H1 (cell line): ENCODE measurements at regions of chr2 and their contacts with region 1.

Region 1: DNA sequence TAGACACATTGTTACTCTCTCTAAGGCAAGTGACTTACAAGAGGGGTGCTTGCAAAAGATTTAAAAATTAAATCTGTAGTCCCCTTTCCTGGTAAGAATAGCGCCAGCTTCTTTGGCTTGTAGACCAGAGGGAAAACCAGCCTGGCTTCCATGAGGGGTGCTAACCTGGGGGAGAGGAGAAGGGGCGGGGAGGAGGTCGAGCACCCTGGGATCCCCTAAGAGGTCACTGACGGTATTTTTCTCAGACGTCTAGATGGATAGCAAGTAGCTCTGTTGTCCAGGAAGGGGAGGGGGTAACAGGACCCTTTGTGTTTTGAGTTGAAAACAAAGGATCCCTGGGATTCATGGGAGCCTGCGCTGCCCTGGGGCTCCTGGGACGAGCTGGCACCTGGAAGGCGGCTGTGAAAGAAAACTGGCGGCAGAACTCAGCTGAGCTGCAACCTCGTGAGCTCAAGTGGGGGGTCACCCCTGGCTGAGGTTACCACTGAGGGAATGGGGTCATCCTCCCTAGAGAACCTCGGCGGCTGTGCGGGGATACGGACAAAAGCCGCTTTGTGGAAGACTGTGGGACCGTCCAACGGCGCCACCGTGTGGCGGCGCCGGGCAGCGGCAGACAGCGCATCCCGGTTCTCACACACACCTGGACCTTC is 37.8 kb upstream of the MRPL19 start:
- DNase-seq: peak; percentile 66 to 89
- H3K4me3 ChIP-seq: peak overlapping the region; percentile 21 to 57 (median 44); a peak in 5 of 8 replicates
- H3K27ac ChIP-seq: no peak overlapping the region
- H3K4me1 ChIP-seq: peaks cover 0 to 4% (median 2%) of the 10 kb centered on the region in 4 experiments; a peak in 4 of 7 replicates
- H3K27me3 ChIP-seq: no peaks in the 10 kb centered on the region; a peak in 2 of 7 replicates
- CTCF ChIP-seq: peak; percentile 90 to 94 (median 92)
- EP300 ChIP-seq: no peak
- POLR2A ChIP-seq: no peak
- RAD21 ChIP-seq: peak; percentile 91 to 93

Region 2: DNA sequence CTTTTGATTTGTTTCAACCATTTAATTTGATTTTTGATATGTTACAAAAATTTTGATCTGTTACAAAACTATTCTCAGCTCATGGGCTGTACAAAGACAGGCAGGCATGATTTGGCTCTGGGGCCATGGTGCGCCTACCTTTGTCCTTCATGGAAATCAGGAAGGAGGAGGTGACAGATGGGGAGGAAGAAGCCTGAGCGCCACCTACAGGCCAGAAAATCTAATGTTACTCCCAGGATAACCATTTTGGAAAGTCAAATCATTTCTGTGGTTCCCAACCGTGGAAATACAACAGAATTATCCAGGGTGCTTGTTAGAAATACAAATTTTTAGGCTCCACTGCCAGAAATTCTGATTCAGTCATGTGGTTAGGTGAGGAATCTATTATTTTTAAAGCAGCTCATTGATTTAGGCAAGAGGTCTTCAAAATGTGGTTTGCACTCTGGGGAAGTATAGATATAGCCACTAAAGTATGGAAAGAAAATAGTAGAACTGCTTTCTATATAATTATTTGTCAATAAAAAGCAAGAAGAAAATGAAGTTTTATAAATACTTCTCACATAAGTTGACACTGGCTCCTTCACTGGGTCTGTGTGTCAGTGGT is 142.0 kb before region 1 on chr2:
- CTCF ChIA-PET with region 1: interaction called, 117 read pairs
- POLR2A ChIA-PET with region 1: interaction called, 3 read pairs
- DNase-seq: peak; percentile 10 to 80
- H3K4me3 ChIP-seq: no peak overlapping the region
- H3K27ac ChIP-seq: no peak overlapping the region
- H3K4me1 ChIP-seq: peaks cover 0 to 3% (median 0%) of the 10 kb centered on the region in 4 experiments; a peak in 2 of 7 replicates
- H3K27me3 ChIP-seq: no peaks in the 10 kb centered on the region
- CTCF ChIP-seq: peak; percentile 44 to 71 (median 65)
- EP300 ChIP-seq: no peak
- POLR2A ChIP-seq: no peak
- RAD21 ChIP-seq: peak; percentile 61 to 67

Region 3: GRCh38 chr2:75553935-75554531 is 54.8 kb before region 1 on chr2:
- CTCF ChIA-PET with region 1: interaction called, 10 read pairs
- POLR2A ChIA-PET with region 1: no interaction called
- DNase-seq: no peak
- H3K4me3 ChIP-seq: peak overlapping the region in 1 of 4 experiments; percentile 9; a peak in 1 of 8 replicates
- H3K27ac ChIP-seq: no peak overlapping the region
- H3K4me1 ChIP-seq: peaks cover 5 to 23% (median 15%) of the 10 kb centered on the region in 4 experiments
- H3K27me3 ChIP-seq: peaks cover 0 to 12% (median under 1%) of the 10 kb centered on the region in 4 experiments; a peak in 3 of 7 replicates
- CTCF ChIP-seq: no peak
- EP300 ChIP-seq: no peak
- POLR2A ChIP-seq: no peak
- RAD21 ChIP-seq: no peak

Region 4: DNA sequence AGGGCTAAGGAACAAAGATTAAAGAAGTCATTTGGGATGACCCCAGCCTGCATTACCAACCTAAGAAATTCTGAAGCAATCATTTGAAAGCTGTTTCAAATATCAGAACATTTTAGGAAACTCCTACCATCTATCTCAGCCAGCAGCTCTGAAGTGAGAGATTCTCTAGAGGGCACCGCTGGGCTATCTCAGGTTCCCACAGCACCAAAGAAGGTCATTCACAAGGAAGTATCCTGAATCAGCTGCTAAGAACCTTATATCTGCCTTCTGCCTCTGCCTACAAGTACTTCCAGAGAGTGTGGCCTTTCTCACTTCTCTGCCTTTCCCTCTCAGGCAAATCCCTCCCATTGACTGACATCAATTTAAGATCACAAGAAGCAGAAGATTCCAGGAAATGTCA is 34.7 kb before region 1 on chr2:
- CTCF ChIA-PET with region 1: interaction called, 18 read pairs
- POLR2A ChIA-PET with region 1: no interaction called
- DNase-seq: no peak
- H3K4me3 ChIP-seq: no peak overlapping the region
- H3K27ac ChIP-seq: no peak overlapping the region
- H3K4me1 ChIP-seq: no peaks in the 10 kb centered on the region
- H3K27me3 ChIP-seq: no peaks in the 10 kb centered on the region; a peak in 2 of 7 replicates
- CTCF ChIP-seq: peak in 1 of 3 experiments; percentile 2; a peak in 1 of 4 replicates
- EP300 ChIP-seq: no peak
- POLR2A ChIP-seq: no peak
- RAD21 ChIP-seq: peak; percentile 22 to 30; a peak in 2 of 4 replicates

Region 5: DNA sequence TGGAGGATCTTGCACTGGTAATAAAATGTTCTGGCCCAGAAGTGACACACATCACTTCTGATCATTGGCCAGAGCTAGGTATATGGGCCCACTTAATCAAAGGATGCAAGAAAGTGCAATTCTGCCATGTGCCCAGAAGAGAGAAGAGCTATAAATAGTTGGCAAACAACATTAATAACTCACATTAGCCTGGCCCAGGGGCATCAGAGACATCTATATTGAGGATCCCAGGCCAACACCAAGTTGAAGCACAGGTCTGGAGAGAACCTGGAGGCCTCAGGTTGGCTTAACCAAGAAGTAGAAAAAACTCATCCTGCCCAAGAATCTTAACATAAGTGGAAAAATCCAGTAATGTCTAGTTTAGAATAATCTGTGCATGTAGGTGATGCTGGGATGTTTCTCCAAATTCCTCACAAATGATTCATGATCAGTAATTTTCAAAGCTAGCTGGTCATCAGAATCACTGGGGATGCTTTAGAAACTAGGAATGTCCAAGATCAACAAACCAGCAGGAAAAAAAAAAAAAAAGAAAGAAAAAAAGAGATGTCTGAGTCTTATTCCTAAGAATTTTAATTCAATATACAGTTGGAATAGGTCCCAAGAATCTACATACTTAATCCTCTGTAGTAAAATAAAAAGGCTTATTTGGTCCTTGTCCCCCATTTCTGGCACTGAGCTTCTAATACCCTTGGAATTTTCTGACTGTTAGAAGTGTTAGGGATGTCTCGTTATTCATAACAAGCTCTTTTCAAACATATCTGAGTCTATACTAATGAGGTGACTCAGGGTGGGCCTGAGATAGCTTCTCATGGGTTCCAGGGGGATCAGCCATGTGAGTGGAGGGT is 13.0 kb before region 1 on chr2:
- CTCF ChIA-PET with region 1: interaction called, 17 read pairs
- POLR2A ChIA-PET with region 1: interaction called, 3 read pairs
- DNase-seq: no peak
- H3K4me3 ChIP-seq: no peak overlapping the region
- H3K27ac ChIP-seq: no peak overlapping the region
- H3K4me1 ChIP-seq: no peaks in the 10 kb centered on the region
- H3K27me3 ChIP-seq: no peaks in the 10 kb centered on the region
- CTCF ChIP-seq: no peak
- EP300 ChIP-seq: no peak
- POLR2A ChIP-seq: no peak
- RAD21 ChIP-seq: no peak

Region 6: DNA sequence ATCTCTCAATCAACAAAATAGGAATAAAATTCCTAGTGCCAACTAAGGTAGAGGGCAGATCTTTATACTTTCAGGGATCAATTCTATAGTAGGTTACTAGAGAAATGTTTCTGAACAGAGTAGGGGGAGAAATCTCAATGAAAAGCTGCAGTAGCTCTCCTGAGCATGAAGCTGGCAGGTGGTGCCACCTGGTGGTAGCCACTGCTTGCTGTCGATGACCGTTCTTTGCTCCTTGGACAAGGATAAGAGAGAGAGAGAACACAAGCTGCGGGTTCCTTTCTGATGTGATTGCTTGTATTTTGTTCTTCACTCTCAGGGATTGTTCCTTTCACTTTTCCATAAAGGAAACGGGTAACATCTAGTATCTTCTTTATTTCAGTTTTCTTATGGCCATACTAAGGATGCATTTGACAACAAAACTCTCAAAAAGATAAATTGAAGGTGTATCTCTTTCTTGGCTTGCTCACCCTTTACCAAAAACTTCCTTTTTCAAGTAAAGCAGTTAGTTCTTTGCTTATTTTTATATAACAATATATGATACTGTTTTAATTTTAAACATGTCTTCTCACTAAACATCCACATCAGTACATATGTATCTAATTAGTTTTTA is 19.2 kb after region 1 on chr2:
- CTCF ChIA-PET with region 1: interaction called, 16 read pairs
- POLR2A ChIA-PET with region 1: no interaction called
- DNase-seq: peak in 1 of 2 experiments; percentile 85
- H3K4me3 ChIP-seq: no peak overlapping the region
- H3K27ac ChIP-seq: no peak overlapping the region
- H3K4me1 ChIP-seq: no peaks in the 10 kb centered on the region
- H3K27me3 ChIP-seq: no peaks in the 10 kb centered on the region
- CTCF ChIP-seq: peak; percentile 90 to 93 (median 90)
- EP300 ChIP-seq: no peak
- POLR2A ChIP-seq: no peak
- RAD21 ChIP-seq: peak; percentile 88 to 89